Transverse colon (tissue), 4 donors: ENCODE measurements at regions of chr1 and their contacts with region 1.

Region 1: DNA sequence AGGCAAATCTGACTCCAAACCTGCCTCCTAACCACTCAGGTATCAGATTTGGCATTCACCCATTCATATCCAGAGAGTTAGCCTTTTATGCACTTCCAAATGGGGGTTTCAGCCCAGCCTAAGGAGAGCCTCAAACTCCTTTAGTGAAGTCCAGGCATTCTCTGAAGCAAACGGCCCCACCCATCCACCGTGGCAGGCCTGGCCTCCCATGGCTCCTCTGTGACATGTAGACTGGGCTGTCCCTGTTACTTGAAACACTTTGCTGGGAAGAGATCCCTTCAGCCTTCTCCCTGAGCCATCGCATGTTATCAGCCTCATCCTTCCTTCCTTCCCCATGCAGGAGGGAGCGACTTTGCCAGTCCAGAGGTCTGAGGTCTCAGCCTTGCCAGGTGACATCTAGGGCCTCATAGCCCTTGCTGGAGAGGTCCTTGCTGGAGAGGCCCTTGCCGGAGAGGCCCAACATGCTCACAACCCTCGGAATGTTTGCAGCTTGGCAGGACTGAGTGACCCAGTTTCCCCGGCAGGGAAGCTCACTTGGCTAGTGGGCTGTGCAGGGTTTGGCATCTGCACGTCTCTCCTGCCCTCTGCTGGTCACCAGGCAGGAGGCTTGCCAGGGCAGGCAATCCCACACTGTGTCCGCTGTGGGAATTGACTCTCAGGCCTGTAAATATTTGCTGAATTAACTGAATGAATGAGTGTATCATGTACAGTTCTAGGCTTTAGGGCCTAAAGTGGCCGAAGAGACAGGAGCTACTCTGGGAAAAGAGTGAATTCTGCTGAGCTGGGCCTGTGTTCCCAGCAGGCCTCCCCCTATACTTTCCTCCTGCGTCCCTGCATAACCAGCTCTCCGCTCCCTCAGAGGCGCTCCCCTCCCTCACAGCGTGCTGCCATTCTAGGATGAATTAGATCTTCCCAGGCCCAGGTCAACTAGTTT is 26.7 kb upstream of the RBM15 start:
- DNase-seq: peak; percentile 82
- H3K4me3 ChIP-seq: no peak overlapping the region
- H3K27ac ChIP-seq: no peak overlapping the region
- H3K4me1 ChIP-seq: peaks cover 2 to 8% (median 5%) of the 10 kb centered on the region in 4 donors
- H3K27me3 ChIP-seq: no peaks in the 10 kb centered on the region
- CTCF ChIP-seq: peak; percentile 89 to 95 (median 90)
- EP300 ChIP-seq: no peak
- POLR2A ChIP-seq: no peak

Region 2: DNA sequence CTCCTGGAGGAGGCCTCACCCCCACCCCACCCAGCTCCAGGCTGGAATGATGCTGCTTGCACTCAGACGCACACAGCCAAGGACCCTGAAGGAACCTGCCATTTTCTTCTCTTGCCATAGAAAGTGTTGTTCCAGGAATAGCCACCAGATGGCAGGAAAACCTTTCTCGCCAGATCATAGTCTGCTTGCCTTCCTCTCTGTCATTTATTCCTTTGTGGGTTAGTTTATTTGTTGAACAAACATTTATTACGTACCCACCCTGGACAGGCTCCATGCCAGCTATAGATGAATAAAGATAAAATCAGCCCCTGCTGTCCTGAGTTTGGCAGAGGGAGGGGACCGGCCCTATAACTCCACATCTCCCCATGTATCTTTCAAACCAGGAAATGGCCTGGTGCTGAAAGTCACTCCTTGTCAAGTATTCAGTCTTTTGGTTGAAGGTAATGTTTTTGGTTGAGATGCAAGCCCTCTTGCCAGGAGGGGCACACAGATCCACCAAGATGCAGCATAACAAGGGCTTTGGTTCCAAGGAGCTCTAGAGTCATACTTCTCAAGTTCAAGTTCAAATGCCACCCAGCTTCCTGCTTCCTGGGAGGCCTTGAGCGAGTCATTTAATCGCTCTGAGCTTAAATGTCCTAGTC is 109.3 kb before region 1 on chr1:
- in situ Hi-C with region 1: loop called in 3 of 4 experiments (anchors 5 kb)
- intact Hi-C with region 1: loop called (anchors 2 kb)
- DNase-seq: peak; percentile 74
- H3K4me3 ChIP-seq: no peak overlapping the region
- H3K27ac ChIP-seq: peak overlapping the region in 3 of 4 donors; percentile 27 to 66 (median 51)
- H3K4me1 ChIP-seq: peaks cover 0 to 12% (median 0%) of the 10 kb centered on the region in 4 donors
- H3K27me3 ChIP-seq: no peaks in the 10 kb centered on the region
- CTCF ChIP-seq: peak; percentile 84 to 94 (median 89)
- EP300 ChIP-seq: no peak
- POLR2A ChIP-seq: no peak

Region 3: GRCh38 chr1:110455151-110455550 is 142.7 kb after region 1 on chr1:
- in situ Hi-C with region 1: loop called in 1 of 4 experiments (anchors 25 kb)
- intact Hi-C with region 1: loop called (anchors 10 kb)
- DNase-seq: no peak
- H3K4me3 ChIP-seq: no peak overlapping the region
- H3K27ac ChIP-seq: no peak overlapping the region
- H3K4me1 ChIP-seq: no peaks in the 10 kb centered on the region
- H3K27me3 ChIP-seq: peaks cover 20% of the 10 kb centered on the region
- CTCF ChIP-seq: no peak
- EP300 ChIP-seq: no peak
- POLR2A ChIP-seq: no peak